Activated CD4-positive, alpha-beta T cell treated with anti-CD3 and anti-CD28 coated beads for 36 hours (primary cell): ENCODE measurements at regions of chr19 and their contacts with region 1.

Region 1: DNA sequence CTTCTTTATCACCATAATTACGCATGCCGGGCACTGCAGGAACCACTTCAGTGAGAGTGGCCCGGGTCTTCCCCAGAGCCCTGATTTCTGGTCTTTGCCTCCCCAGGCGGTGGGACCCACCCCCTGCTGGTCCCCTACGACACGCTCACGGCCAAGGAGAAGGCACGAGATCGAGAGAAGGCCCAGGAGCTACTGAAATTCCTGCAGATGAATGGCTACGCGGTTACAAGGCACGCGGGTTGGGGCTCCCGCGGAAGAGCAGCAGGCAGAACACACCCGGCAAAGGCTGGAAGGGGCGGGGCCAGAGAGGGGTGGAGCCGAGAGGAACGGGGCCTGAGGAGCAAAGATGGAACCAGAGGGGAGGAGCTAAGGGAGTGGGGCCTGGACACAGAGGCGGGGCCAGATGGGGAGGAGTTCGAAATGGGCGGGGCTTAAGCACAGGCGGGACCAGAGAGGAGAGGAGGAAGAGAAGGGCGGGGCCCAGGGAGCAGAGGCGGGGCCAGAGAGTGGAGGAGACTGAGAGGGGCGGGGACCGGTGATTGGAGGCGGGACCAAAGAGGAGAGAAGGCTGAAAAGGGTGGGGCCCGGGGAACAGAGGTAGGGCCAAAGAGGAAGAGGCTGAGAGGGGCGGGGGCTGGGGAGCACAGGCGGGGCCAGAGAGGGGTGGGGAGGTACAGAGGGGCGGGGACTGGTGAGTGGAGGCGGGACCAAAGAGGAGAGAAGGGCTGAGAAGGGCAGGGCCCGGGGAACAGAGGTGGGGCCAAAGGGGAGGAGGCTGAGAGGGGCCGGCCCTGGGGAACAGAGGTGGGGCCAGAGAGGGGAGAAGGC is 73.4 kb downstream of the RYR1 start:
- DNase-seq: peak; percentile 98
- ATAC-seq: peak; percentile 94
- H3K4me3 Mint-ChIP-seq: no peak overlapping the region
- H3K27ac Mint-ChIP-seq: no peak overlapping the region
- H3K4me1 Mint-ChIP-seq: peaks cover 6% of the 10 kb centered on the region
- H3K27me3 Mint-ChIP-seq: peaks cover 2% of the 10 kb centered on the region

Region 2: DNA sequence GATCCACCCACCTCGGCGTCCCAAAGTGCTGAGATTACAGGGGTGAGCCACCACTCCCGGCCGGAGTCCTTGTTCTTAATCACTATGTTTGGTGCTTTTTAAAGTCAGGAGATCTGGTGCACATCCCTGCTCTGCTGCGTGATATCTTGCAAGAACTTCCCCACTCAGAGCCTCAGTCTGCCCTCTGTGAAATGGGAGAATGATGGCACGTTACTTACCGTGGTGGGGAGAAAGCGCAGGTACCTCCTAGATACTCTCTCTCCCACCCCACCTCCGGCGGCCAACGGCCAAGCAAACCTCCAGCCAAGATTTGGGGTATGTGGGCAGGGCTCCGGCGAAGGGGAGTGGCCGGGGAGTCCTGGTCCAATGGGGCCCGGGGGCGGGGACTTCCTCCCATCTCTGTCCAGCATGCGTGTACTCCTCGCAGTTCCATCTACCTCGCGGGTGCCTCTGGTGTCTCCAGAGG is 73.6 kb before region 1 on chr19 and contains the start of gene RYR1:
- CTCF ChIA-PET with region 1: no interaction called
- POLR2A ChIA-PET with region 1: no interaction called
- intact Hi-C with region 1: loop called in 1 of 2 experiments (anchors 2 kb)
- DNase-seq: peak; percentile 77
- ATAC-seq: peak; percentile 57
- H3K4me3 Mint-ChIP-seq: peak within 1 kb of the TSS; percentile 51
- H3K27ac Mint-ChIP-seq: no peak within 1 kb of the TSS
- H3K4me1 Mint-ChIP-seq: peaks cover 22% of the 10 kb centered on the region
- H3K27me3 Mint-ChIP-seq: peaks cover 9% of the 10 kb centered on the region
- total RNA-seq, gene RYR1: 2.0 to 3.1 TPM